ENCODE measurements at regions of chr5 and their contacts with region 1.

Region 1: GRCh38 chr5:53170748-53171349 is 61.3 kb upstream of the MOCS2 start:
- DNase-seq: peak; percentile 15
- H3K4me3 ChIP-seq: no peak overlapping the region
- H3K27ac ChIP-seq: no peak overlapping the region
- H3K4me1 ChIP-seq: peaks cover 0 to 24% (median 3%) of the 10 kb centered on the region in 4 donors
- H3K27me3 ChIP-seq: no peaks in the 10 kb centered on the region
- CTCF ChIP-seq: peak; percentile 41 to 62 (median 56)
- EP300 ChIP-seq: no peak
- POLR2A ChIP-seq: no peak

Region 2: GRCh38 chr5:53233652-53234405 is 63.0 kb after region 1 on chr5:
- in situ Hi-C with region 1: no loop called
- intact Hi-C with region 1: no loop called
- DNase-seq: no peak
- H3K4me3 ChIP-seq: no peak overlapping the region
- H3K27ac ChIP-seq: no peak overlapping the region
- H3K4me1 ChIP-seq: no peaks in the 10 kb centered on the region
- H3K27me3 ChIP-seq: no peaks in the 10 kb centered on the region
- CTCF ChIP-seq: no peak
- EP300 ChIP-seq: no peak
- POLR2A ChIP-seq: no peak

Region 3: GRCh38 chr5:53425598-53426511 is 255.0 kb after region 1 on chr5:
- in situ Hi-C with region 1: loop called in 1 of 4 experiments (anchors 25 kb)
- intact Hi-C with region 1: no loop called
- DNase-seq: peak; percentile 17
- H3K4me3 ChIP-seq: no peak overlapping the region
- H3K27ac ChIP-seq: no peak overlapping the region
- H3K4me1 ChIP-seq: no peaks in the 10 kb centered on the region
- H3K27me3 ChIP-seq: peaks cover 3% of the 10 kb centered on the region
- CTCF ChIP-seq: peak; percentile 29 to 43 (median 31)
- EP300 ChIP-seq: no peak
- POLR2A ChIP-seq: no peak

Region 4: DNA sequence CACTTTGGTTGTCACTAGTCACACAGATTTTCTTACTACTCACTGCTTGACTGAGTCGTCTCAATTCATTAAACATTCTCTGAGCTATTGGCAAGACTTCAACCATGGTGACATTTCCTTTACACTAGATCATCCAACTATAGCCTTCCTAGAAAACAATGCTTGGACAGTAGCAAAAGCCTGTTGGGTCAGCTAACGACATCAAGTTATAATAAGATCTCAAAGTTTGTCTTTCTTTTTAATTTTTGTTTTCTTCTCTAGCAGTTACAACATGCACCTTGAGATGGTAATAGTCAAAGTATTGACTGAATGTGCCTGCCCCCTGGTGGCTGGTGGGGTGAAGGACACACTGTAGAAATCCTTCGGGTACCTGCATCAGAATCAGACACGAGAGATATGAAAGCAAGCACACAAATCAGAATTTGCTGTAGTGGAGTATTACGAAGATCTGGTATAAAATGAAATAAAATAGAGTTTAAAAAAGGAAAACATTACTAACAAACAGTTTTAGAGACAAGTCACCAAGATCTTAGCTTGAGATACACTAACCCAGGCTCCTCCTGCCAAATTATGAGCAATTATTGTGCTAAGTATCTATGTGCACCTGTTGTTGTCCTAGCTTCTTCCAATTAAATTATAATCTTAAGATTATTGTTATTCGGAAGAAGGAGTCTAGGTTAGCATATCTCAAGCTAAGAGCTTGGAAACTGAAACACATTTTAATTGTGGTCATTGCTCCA is 1058.4 kb after region 1 on chr5:
- in situ Hi-C with region 1: loop called in 3 of 4 experiments (anchors 25 kb)
- intact Hi-C with region 1: loop called (anchors 10 kb)
- DNase-seq: peak; percentile 80
- H3K4me3 ChIP-seq: no peak overlapping the region
- H3K27ac ChIP-seq: no peak overlapping the region
- H3K4me1 ChIP-seq: peaks cover 0 to 6% (median 0%) of the 10 kb centered on the region in 4 donors
- H3K27me3 ChIP-seq: no peaks in the 10 kb centered on the region
- CTCF ChIP-seq: peak; percentile 87 to 95 (median 91)
- EP300 ChIP-seq: no peak
- POLR2A ChIP-seq: no peak

Region 5: GRCh38 chr5:54234304-54234933 is 1063.6 kb after region 1 on chr5:
- in situ Hi-C with region 1: loop called in 3 of 4 experiments (anchors 25 kb)
- intact Hi-C with region 1: loop called (anchors 10 kb)
- DNase-seq: no peak
- H3K4me3 ChIP-seq: no peak overlapping the region
- H3K27ac ChIP-seq: no peak overlapping the region
- H3K4me1 ChIP-seq: peaks cover 0 to 5% (median 0%) of the 10 kb centered on the region in 4 donors
- H3K27me3 ChIP-seq: no peaks in the 10 kb centered on the region
- CTCF ChIP-seq: peak; percentile 37 to 54 (median 49)
- EP300 ChIP-seq: no peak
- POLR2A ChIP-seq: no peak

Region 6: DNA sequence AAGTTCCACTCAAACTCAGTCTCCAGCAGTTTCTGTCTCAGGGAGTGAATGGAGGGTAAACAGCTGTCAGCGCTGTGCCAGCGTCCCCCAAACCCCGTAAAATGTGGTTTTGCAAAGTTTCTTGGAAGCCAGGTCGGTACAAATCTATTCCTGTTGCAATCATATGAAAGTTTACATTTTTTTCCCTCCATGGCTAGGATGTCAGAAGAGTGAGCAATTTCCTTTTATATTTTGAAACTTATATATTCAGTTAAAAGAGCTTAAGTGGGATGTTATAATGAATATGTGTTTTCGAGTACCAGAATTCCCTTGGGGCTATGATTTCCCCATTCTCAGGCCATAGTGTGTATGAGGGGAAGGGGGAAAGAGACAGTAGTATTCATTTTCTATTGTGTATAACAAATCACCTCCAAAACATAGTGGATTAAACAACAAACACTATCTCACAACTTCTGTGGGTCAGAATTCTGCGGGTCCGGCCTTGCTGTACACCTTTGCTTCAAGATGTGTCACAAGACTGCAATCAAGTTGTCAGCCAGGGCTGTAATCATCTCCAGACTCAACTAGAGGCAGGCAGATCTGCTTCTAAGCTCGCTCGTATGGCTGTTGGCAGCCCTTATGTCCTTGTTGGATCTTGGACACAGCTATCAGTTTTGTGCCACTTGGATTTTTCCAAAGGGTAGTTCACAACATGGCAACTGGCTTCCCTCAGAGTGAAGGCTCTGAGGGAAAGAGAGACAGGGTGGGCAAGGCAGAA is 1454.1 kb after region 1 on chr5:
- in situ Hi-C with region 1: no loop called
- intact Hi-C with region 1: no loop called
- DNase-seq: no peak
- H3K4me3 ChIP-seq: no peak overlapping the region
- H3K27ac ChIP-seq: no peak overlapping the region
- H3K4me1 ChIP-seq: no peaks in the 10 kb centered on the region
- H3K27me3 ChIP-seq: no peaks in the 10 kb centered on the region
- CTCF ChIP-seq: no peak
- EP300 ChIP-seq: no peak
- POLR2A ChIP-seq: no peak